Activated B cell treated with CpG ODN at 0.5 μM for 24 hours (primary cell): ENCODE measurements at regions of chr1 and their contacts with region 1.

Region 1: DNA sequence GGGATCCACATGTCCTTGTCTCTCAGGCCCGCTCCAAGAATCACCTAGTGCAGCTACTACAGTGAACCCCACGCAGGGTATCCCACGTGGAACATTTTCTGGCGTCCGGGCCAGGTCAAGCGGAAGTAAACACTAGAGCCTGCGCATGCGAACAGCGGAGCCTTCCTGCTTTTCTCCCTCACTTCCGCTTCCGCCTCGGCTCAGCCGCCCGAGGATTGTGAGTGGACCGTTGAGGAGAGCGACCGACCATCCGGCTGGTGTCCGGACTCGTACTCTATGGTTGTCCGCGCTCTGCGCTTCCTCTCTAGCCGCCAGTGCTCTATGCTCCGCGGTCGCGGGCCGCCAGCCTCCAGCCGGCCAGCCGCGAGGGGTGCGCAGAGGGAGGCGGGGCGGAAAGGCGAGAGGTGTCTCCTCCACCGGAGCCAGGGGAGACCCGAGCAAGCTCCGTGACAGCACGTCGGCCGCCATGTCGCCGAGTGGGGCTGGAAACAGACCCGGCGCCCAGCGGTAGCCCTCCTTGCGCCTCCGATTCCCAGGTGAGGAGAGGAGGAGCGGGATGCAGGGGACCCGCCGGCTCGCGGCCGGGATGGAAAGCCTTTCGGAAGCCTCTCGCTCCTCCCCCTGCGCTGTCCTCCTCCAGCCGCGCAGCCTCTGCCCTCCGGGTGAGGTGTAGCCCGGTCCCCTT is at the starts of genes CNST and TFB2M:
- DNase-seq: peak; percentile 95
- ATAC-seq: peak; percentile 89
- H3K4me3 Mint-ChIP-seq: peak within 1 kb of the TSS; percentile 99
- H3K27ac Mint-ChIP-seq: peak within 1 kb of the TSS; percentile 97
- H3K4me1 Mint-ChIP-seq: peaks cover 60% of the 10 kb centered on the region
- H3K27me3 Mint-ChIP-seq: no peaks in the 10 kb centered on the region
- CTCF ChIP-seq: no peak
- total RNA-seq, gene CNST: 30.2 and 35.2 TPM in 2 replicates
- total RNA-seq, gene TFB2M: 15.9 and 18.3 TPM in 2 replicates

Region 2: DNA sequence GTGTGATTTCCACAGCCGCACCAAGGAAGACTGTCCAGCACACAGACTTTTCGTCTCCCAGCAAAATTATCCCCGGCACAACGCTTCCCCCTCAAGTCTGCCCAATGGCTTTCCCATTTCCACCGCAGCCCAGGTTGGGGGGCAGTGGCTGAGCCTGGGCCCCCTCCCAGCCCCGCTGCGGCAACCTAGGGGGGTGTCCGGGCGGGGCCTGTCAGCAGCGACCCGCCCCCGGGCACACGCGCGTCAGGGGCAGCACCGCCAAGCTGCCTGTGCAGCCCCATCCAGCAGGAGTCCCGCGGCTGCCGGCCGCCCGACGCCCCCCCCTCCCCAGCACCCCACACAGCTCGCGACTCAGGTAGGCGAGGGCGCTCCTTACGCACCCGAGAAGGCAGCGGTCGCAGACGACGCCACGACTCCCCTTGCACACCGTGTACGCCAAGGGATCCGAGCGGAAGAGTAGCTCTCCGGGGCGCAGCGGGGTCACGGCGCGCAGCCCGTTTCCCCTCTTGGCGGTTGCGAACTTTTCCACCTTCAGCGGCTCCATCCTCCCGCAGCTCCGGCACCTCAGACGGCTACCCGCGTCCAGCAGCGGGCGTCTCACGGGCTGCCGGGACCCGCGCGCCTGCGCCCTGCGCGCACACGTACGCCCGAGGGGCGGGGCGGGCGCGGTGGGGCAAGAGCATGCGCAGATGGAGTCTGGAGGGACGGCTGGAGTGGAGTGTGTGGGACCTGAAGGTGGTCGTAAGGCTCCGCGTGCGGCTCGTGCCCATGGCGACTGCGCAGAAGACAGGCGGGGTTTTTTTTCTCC is 59.4 kb before region 1 on chr1 and contains the start of gene SMYD3:
- CTCF ChIA-PET with region 1: no interaction called
- POLR2A ChIA-PET with region 1: interaction called, 12 read pairs
- intact Hi-C with region 1: loop called (anchors 1 kb)
- DNase-seq: peak; percentile 67
- ATAC-seq: peak; percentile 93
- H3K4me3 Mint-ChIP-seq: peak within 1 kb of the TSS; percentile 93
- H3K27ac Mint-ChIP-seq: peak within 1 kb of the TSS; percentile 86
- H3K4me1 Mint-ChIP-seq: peaks cover 22% of the 10 kb centered on the region
- H3K27me3 Mint-ChIP-seq: no peaks in the 10 kb centered on the region
- CTCF ChIP-seq: no peak
- total RNA-seq, gene SMYD3: 18.3 and 20.8 TPM in 2 replicates

Region 3: GRCh38 chr1:246600579-246600978 is 34.3 kb after region 1 on chr1:
- CTCF ChIA-PET with region 1: no interaction called
- POLR2A ChIA-PET with region 1: no interaction called
- intact Hi-C with region 1: loop called (anchors 2 kb)
- DNase-seq: no peak
- ATAC-seq: no peak
- H3K4me3 Mint-ChIP-seq: no peak overlapping the region
- H3K27ac Mint-ChIP-seq: no peak overlapping the region
- H3K4me1 Mint-ChIP-seq: peaks cover 33% of the 10 kb centered on the region
- H3K27me3 Mint-ChIP-seq: no peaks in the 10 kb centered on the region
- CTCF ChIP-seq: no peak

Region 4: GRCh38 chr1:246699095-246699735 is 132.9 kb after region 1 on chr1:
- CTCF ChIA-PET with region 1: no interaction called
- POLR2A ChIA-PET with region 1: no interaction called
- intact Hi-C with region 1: loop called (anchors 1 kb)
- DNase-seq: peak; percentile 62
- ATAC-seq: peak; percentile 90
- H3K4me3 Mint-ChIP-seq: peak overlapping the region; percentile 74
- H3K27ac Mint-ChIP-seq: peak overlapping the region; percentile 57
- H3K4me1 Mint-ChIP-seq: peaks cover 8% of the 10 kb centered on the region
- H3K27me3 Mint-ChIP-seq: no peaks in the 10 kb centered on the region
- CTCF ChIP-seq: no peak

Region 5: GRCh38 chr1:247103859-247104591 is 537.8 kb after region 1 on chr1 and contains the start of gene ZNF669:
- CTCF ChIA-PET with region 1: no interaction called
- POLR2A ChIA-PET with region 1: no interaction called
- intact Hi-C with region 1: loop called (anchors 10 kb)
- DNase-seq: peak; percentile 89
- ATAC-seq: peak; percentile 98
- H3K4me3 Mint-ChIP-seq: peak within 1 kb of the TSS; percentile 96
- H3K27ac Mint-ChIP-seq: peak within 1 kb of the TSS; percentile 90
- H3K4me1 Mint-ChIP-seq: peaks cover 21% of the 10 kb centered on the region
- H3K27me3 Mint-ChIP-seq: peaks cover 23% of the 10 kb centered on the region
- CTCF ChIP-seq: no peak
- total RNA-seq, gene ZNF669: 17.5 and 18.0 TPM in 2 replicates

Region 6: GRCh38 chr1:247294282-247294681 is 728.0 kb after region 1 on chr1:
- CTCF ChIA-PET with region 1: no interaction called
- POLR2A ChIA-PET with region 1: no interaction called
- intact Hi-C with region 1: no loop called
- DNase-seq: no peak
- ATAC-seq: no peak
- H3K4me3 Mint-ChIP-seq: no peak overlapping the region
- H3K27ac Mint-ChIP-seq: no peak overlapping the region
- H3K4me1 Mint-ChIP-seq: no peaks in the 10 kb centered on the region
- H3K27me3 Mint-ChIP-seq: no peaks in the 10 kb centered on the region
- CTCF ChIP-seq: no peak